ENCODE measurements at regions of chr18 and their contacts with region 1.

Region 1: GRCh38 chr18:22983175-22983574 is 50.0 kb downstream of the RBBP8 start:
- DNase-seq: peak; percentile 24
- ATAC-seq: peak; percentile 57; the same call in 1 of the 2 replicates
- H3K4me3 ChIP-seq: no peak overlapping the region
- H3K27ac ChIP-seq: no peak overlapping the region
- H3K4me1 ChIP-seq: peaks cover 6 to 8% of the 10 kb centered on the region in 2 experiments
- H3K27me3 ChIP-seq: no peaks in the 10 kb centered on the region
- CTCF ChIP-seq: peak; percentile 36 to 65 (median 64); a peak in 4 of 6 replicates
- POLR2A ChIP-seq: no peak
- RAD21 ChIP-seq: peak; percentile 77

Region 2: DNA sequence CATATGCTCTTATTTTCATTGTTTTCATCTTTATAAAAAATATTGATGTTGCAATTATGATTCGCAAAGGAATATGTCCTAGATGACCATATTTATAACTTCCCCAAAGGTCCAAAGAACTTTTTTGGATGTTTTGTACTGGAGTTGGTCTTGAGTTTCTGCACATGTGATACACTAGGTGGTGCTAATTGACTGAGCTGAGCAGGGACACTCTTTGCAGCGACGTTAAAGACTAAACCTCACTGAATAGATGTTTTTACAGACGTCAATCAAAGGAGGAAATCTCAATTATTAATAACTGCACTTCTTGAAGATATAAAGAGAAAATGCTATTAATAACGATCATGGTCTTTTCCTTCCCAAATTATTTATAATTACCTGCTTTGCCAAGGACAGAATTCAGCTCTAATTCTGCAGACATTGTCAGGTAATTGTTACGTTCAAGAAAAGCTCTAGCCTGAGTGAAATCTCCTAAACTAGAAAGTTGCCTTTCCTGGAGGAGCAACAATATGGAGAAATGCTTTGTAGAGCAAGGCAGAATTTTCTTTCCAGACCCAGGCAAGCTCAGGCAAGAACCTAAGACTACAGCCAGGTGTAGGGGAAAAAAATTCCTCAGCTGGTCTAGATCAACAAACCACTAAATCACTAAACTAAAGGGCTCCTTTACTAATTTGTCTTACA is 169.4 kb before region 1 on chr18:
- CTCF ChIA-PET with region 1: interaction called, 60 read pairs
- POLR2A ChIA-PET with region 1: interaction called, 4 read pairs
- RAD21 ChIA-PET with region 1: interaction called, 7 to 9 read pairs
- intact Hi-C with region 1: loop called (anchors 1 kb)
- DNase-seq: no peak
- ATAC-seq: peak; percentile 74
- H3K4me3 ChIP-seq: no peak overlapping the region
- H3K27ac ChIP-seq: peak overlapping the region; percentile 67
- H3K4me1 ChIP-seq: peaks cover 41 to 43% of the 10 kb centered on the region in 2 experiments
- H3K27me3 ChIP-seq: no peaks in the 10 kb centered on the region
- CTCF ChIP-seq: peak; percentile 65 to 84 (median 83)
- POLR2A ChIP-seq: no peak
- RAD21 ChIP-seq: peak; percentile 97

Region 3: DNA sequence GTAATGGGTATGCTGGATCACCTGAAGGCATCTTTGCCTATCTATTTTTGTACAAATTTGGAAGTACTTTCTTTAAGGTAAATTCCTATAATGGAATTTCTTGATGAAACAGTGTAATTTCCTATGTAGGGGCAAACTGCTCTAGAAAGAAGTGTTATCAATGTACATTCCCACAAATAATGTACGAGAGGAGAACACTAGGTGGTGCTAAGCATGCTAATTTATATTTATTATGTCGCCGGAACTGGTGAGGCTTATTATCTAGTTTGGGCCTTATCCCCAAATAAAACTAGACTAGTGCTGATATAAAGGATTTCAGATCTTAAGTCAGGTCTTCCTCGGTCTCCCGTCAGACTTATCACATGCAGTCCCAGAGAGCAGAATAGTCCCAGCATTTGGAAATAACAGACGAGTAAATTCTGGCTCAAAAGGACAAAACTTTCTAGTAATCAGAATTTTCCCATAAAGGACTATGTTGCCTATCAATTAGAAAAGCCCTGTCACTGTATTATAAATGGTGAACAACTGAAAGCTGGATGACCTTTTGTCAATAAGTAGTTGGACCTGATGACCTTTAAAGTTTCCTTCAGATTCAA is 137.0 kb before region 1 on chr18:
- CTCF ChIA-PET with region 1: interaction called, 7 read pairs
- POLR2A ChIA-PET with region 1: interaction called, 4 read pairs
- RAD21 ChIA-PET with region 1: no interaction called
- intact Hi-C with region 1: loop called (anchors 2 kb)
- DNase-seq: peak; percentile 21
- ATAC-seq: peak; percentile 80
- H3K4me3 ChIP-seq: no peak overlapping the region
- H3K27ac ChIP-seq: no peak overlapping the region
- H3K4me1 ChIP-seq: peaks cover 14% of the 10 kb centered on the region in 2 experiments
- H3K27me3 ChIP-seq: no peaks in the 10 kb centered on the region
- CTCF ChIP-seq: peak; percentile 40 to 66 (median 44); a peak in 4 of 6 replicates
- POLR2A ChIP-seq: no peak
- RAD21 ChIP-seq: peak; percentile 63